PC-9 (cell line): ENCODE measurements at regions of chr4 and their contacts with region 1.

Region 1: DNA sequence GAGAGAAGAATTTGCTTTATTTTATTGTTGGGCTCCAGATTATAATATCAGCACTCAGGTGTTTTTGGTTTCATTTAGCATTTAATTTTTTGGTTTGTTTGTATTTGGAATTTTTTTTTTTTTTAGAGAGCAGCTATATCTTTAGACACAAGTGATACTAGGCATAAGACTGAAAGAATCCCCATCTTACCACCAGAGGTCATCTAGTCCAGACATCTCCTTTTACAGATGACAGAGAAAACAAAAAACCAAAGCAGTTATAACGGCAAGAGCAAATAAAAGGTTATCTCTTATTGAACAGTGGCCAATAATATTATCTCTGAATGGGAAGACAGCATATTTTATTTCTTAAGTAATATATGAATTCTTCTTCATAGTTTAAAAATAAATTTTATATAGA is 22.8 kb downstream of the USP38 start:
- DNase-seq: no peak
- H3K4me3 ChIP-seq: no peak overlapping the region
- H3K27ac ChIP-seq: no peak overlapping the region
- H3K4me1 ChIP-seq: no peaks in the 10 kb centered on the region
- H3K27me3 ChIP-seq: no peaks in the 10 kb centered on the region
- CTCF ChIP-seq: peak; percentile 26; the same call in 1 of the 2 replicates

Region 2: GRCh38 chr4:142893012-142893411 is 314.5 kb before region 1 on chr4:
- CTCF ChIA-PET with region 1: no interaction called
- POLR2A ChIA-PET with region 1: no interaction called
- intact Hi-C with region 1: no loop called
- DNase-seq: no peak
- H3K4me3 ChIP-seq: no peak overlapping the region
- H3K27ac ChIP-seq: no peak overlapping the region
- H3K4me1 ChIP-seq: no peaks in the 10 kb centered on the region
- H3K27me3 ChIP-seq: no peaks in the 10 kb centered on the region
- CTCF ChIP-seq: no peak

Region 3: GRCh38 chr4:143482840-143483239 is 275.3 kb after region 1 on chr4:
- CTCF ChIA-PET with region 1: no interaction called
- POLR2A ChIA-PET with region 1: no interaction called
- intact Hi-C with region 1: loop called (anchors 1 kb)
- DNase-seq: peak; percentile 16 to 40
- H3K4me3 ChIP-seq: no peak overlapping the region
- H3K27ac ChIP-seq: no peak overlapping the region
- H3K4me1 ChIP-seq: no peaks in the 10 kb centered on the region
- H3K27me3 ChIP-seq: no peaks in the 10 kb centered on the region
- CTCF ChIP-seq: peak; percentile 69